ENCODE measurements at regions of chr4 and their contacts with region 1.

Region 1: DNA sequence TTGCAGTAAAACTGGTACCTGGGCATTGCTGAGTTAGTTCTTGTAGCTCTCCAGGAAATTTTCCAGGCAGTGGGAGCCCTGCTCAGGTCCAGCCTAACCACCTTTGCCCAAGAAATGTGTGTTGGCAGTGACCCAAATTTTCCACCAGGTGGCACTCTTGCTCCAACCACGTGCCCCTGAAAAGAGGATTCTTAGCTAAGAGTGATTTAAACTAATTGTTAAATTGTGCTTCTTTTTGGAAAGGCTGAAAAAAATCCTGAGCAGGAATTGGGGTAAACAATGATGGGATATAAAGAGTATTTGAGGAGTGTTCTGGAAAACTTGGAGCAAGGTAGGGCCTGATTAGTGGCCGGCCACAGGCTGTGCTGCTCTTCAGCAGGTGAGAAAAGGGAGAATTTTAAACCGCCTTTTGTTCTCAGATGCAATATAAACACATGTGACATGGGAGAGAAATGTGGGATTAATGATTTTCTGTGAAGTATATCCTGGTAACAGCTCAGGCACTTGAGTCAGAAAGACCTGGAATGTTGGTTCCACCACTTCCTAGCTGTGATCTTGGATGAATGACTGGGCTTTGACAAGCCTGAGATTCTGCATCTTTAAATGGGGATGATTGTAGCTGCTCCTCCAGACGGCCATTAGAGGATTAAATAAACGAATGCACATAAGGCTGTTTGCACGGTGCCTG is 219.6 kb downstream of the PTTG2 start:
- DNase-seq: peak; percentile 60 to 76 (median 72)
- ATAC-seq: peak; percentile 83
- H3K4me3 ChIP-seq: no peak overlapping the region
- H3K27ac ChIP-seq: no peak overlapping the region
- H3K4me1 ChIP-seq: peaks cover 4 to 15% of the 10 kb centered on the region in 2 experiments
- H3K27me3 ChIP-seq: no peaks in the 10 kb centered on the region; a peak in 1 of 5 replicates
- CTCF ChIP-seq: peak; percentile 82 to 90 (median 88)
- EP300 ChIP-seq: no peak
- POLR2A ChIP-seq: no peak
- RAD21 ChIP-seq: peak; percentile 97 to 98

Region 2: DNA sequence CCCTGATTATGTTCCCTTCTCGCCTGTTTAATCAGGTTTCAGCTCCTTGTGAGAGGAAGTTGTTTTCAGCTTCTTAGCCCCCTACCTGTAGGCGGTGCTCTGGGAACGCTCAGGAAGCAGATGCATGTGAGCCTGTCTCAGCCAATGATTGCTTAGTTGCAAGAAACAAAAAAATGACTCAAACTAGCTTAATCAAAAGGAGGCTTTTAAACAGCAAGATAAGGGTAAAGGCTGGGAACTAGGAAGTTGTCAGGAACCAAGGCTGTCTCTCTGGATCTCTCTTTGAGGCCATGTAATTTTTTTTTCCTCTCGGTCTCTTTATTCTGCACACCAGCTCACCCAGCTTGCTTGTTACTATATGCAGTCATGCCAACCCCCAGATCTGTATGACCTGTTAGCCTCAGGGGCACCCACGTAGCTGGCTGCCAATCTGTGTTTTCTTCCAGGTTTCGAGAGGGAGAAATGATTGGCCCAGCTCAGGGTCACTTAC is 110.5 kb before region 1 on chr4:
- CTCF ChIA-PET with region 1: interaction called, 10 read pairs
- POLR2A ChIA-PET with region 1: no interaction called
- in situ Hi-C with region 1: no loop called
- intact Hi-C with region 1: loop called (anchors 2 kb)
- DNase-seq: peak; percentile 41 to 78 (median 56)
- ATAC-seq: peak; percentile 96
- H3K4me3 ChIP-seq: no peak overlapping the region
- H3K27ac ChIP-seq: no peak overlapping the region
- H3K4me1 ChIP-seq: peaks cover 7 to 10% of the 10 kb centered on the region in 2 experiments; a peak in 3 of 5 replicates
- H3K27me3 ChIP-seq: no peaks in the 10 kb centered on the region
- CTCF ChIP-seq: peak; percentile 69 to 94 (median 89)
- EP300 ChIP-seq: peak; percentile 48; the same call in 1 of the 2 replicates
- POLR2A ChIP-seq: no peak
- RAD21 ChIP-seq: peak; percentile 89 to 94

Region 3: DNA sequence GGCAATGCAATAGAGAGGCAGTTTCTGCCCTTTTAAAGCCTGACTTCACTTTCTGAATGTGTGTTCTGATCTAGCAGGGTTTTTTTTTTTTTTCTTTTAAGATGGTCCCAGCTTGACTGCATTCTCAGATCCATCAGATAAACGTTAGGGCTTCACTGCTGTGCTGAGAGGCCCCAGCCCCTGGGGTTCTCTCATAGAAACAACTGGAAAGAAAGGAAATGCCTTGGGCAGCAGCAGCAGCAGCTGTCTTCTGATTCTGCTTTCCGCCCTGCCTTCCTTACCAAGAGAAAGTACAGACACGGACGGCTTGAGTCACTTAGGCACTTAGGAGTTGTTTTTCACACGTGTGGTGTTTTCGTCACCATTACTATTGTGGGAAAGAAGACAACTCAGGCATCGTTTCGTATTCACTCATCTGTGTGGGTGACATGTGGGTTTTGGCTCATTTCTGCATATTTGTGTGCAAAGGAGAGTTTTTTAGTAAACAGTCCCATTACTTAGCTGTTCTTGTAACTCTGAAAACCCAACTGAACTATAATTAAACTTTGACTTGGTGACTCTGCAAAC is 47.6 kb before region 1 on chr4:
- CTCF ChIA-PET with region 1: no interaction called
- POLR2A ChIA-PET with region 1: no interaction called
- in situ Hi-C with region 1: no loop called
- intact Hi-C with region 1: no loop called
- DNase-seq: no peak
- ATAC-seq: no peak
- H3K4me3 ChIP-seq: no peak overlapping the region
- H3K27ac ChIP-seq: no peak overlapping the region
- H3K4me1 ChIP-seq: peaks cover 0 to 3% of the 10 kb centered on the region in 2 experiments; a peak in 1 of 5 replicates
- H3K27me3 ChIP-seq: peaks cover 19 to 52% of the 10 kb centered on the region in 2 experiments
- CTCF ChIP-seq: no peak
- EP300 ChIP-seq: no peak
- POLR2A ChIP-seq: no peak
- RAD21 ChIP-seq: no peak

Region 4: GRCh38 chr4:38582889-38583470 is 403.1 kb after region 1 on chr4:
- CTCF ChIA-PET with region 1: no interaction called
- POLR2A ChIA-PET with region 1: no interaction called
- in situ Hi-C with region 1: no loop called
- intact Hi-C with region 1: loop called (anchors 10 kb)
- DNase-seq: no peak
- ATAC-seq: no peak
- H3K4me3 ChIP-seq: no peak overlapping the region
- H3K27ac ChIP-seq: no peak overlapping the region
- H3K4me1 ChIP-seq: no peaks in the 10 kb centered on the region
- H3K27me3 ChIP-seq: no peaks in the 10 kb centered on the region
- CTCF ChIP-seq: no peak
- EP300 ChIP-seq: no peak
- POLR2A ChIP-seq: no peak
- RAD21 ChIP-seq: no peak

Region 5: DNA sequence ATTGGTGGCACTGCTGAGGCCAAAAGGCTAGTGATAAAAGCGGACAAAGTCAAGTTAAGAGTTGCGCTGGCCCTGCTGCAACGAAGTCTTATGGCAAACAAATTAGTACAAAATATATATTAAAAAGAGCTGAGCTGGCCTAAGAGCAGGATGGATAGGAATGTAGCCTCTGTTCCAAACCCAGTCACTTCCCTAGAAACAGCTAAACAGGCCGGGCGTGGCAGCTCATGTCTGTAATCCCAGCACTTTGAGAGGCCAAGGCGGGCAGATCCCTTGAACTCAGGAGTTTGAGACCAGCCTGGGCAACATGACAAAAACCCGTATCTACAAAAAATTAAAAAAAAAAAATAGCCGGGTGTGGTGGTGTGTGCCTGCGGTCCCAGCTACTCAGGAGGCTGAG is 1379.8 kb after region 1 on chr4:
- CTCF ChIA-PET with region 1: no interaction called
- POLR2A ChIA-PET with region 1: no interaction called
- in situ Hi-C with region 1: no loop called
- intact Hi-C with region 1: no loop called
- DNase-seq: no peak
- ATAC-seq: no peak
- H3K4me3 ChIP-seq: no peak overlapping the region
- H3K27ac ChIP-seq: no peak overlapping the region
- H3K4me1 ChIP-seq: no peaks in the 10 kb centered on the region; a peak in 1 of 5 replicates
- H3K27me3 ChIP-seq: peaks cover 0 to 13% of the 10 kb centered on the region in 2 experiments; a peak in 3 of 5 replicates
- CTCF ChIP-seq: no peak
- EP300 ChIP-seq: no peak
- POLR2A ChIP-seq: no peak
- RAD21 ChIP-seq: no peak